Left colon (tissue), 2 donors: ENCODE measurements at regions of chr11 and their contacts with region 1.

Region 1: GRCh38 chr11:84558085-84558905 is 1068.8 kb downstream of the DLG2 start:
- DNase-seq: peak; percentile 25 to 30
- ATAC-seq: peak; percentile 87

Region 2: GRCh38 chr11:84648471-84648870 is 90.2 kb after region 1 on chr11:
- intact Hi-C with region 1: no loop called
- DNase-seq: no peak
- ATAC-seq: no peak

Region 3: DNA sequence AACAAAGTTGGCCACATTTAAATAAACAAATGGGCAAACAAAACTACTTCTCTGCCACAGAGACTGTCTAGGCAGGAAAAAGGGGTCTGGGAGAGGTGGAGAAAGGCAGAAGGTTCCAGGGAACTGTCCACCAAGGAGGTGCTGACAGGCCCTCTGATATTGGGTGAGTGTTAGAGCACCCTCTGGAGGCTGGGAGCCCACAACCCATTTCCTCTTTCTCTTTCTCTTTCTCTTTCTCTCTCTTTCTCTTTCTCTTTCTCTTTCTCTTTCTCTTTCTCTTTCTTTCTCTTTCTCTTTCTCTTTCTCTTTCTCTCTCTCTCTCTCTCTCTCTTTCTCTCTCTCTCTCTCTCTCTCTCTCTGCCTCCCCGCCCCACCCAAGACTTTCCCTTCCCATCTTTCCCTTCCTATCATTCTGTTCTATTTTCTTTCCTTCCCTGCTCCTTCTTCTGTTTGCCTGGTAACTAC is 156.1 kb after region 1 on chr11:
- intact Hi-C with region 1: loop called in 1 of 2 experiments (anchors 5 kb)
- DNase-seq: peak; percentile 46 to 81
- ATAC-seq: peak; percentile 99